Right ventricle myocardium superior (tissue), 1 donor: ENCODE measurements at regions of chr1 and their contacts with region 1.

Region 1: GRCh38 chr1:178869119-178869697 is 1.7 kb downstream of the ANGPTL1 start:
- DNase-seq: no peak
- ATAC-seq: peak; percentile 66

Region 2: GRCh38 chr1:178931858-178932551 is 62.8 kb after region 1 on chr1:
- intact Hi-C with region 1: loop called (anchors 5 kb)
- DNase-seq: peak; percentile 90
- ATAC-seq: peak; percentile 86

Region 3: DNA sequence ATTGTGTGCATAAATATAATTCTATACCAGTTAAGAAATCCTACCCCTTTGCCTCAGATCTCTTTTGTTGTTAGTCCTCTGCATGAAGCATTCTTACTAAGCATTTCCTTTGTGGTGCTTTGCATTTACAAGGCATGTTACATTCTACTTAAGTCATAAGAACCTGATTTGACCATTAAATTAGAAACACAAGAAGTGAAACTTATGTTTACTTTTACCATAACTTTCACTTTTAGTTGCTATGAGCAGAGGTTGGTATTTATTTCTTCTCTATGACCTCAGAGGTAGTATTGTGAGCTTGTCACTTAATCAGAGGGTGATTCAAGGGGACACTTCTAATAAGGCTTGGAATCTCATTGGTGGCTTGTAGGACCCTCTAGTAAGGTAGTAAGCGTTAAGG is 165.5 kb after region 1 on chr1:
- intact Hi-C with region 1: no loop called
- DNase-seq: no peak
- ATAC-seq: no peak